ENCODE measurements at regions of chr10 and their contacts with region 1.

Region 1: DNA sequence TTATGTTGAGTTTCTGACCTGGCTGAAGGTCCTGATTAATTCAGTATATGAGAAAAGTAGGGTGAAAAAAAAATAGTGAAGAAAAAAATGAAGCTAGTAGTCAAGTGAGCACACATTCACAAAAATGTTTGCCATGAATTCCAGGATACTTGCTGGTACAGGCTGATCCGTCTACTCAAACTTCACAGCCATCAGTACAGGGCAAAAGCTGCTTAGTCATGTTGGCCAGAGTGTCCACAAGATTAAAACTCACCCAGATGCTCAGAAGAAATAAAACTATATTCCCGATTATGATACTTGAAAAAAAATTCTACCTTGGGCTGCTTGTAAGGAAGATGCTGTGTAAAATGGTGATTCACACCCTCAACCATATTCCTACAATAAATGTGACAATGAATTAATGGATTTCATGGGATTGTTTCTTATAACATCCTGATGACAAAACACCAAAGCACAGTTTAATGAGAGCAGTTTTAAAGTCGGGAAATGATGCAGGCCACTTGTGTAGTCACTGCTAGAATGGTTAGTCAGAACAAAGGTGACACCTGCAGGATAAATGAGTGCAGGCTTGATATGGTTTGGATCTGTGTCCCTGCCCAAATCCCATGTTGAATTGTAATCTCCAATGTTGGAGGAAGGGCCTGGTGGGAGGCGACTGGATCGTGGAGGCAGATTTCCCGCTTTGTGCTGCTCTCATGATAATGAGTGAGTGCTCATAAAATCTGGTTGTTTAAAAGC is 49.2 kb upstream of the ANKRD1 start:
- DNase-seq: no peak
- H3K4me3 ChIP-seq: no peak overlapping the region
- H3K27ac ChIP-seq: peak overlapping the region in 1 of 2 donors; percentile 32
- H3K4me1 ChIP-seq: no peaks in the 10 kb centered on the region
- H3K27me3 ChIP-seq: no peaks in the 10 kb centered on the region
- CTCF ChIP-seq: peak in 3 of 4 experiments; percentile 17 to 41 (median 27)
- POLR2A ChIP-seq: no peak

Region 2: DNA sequence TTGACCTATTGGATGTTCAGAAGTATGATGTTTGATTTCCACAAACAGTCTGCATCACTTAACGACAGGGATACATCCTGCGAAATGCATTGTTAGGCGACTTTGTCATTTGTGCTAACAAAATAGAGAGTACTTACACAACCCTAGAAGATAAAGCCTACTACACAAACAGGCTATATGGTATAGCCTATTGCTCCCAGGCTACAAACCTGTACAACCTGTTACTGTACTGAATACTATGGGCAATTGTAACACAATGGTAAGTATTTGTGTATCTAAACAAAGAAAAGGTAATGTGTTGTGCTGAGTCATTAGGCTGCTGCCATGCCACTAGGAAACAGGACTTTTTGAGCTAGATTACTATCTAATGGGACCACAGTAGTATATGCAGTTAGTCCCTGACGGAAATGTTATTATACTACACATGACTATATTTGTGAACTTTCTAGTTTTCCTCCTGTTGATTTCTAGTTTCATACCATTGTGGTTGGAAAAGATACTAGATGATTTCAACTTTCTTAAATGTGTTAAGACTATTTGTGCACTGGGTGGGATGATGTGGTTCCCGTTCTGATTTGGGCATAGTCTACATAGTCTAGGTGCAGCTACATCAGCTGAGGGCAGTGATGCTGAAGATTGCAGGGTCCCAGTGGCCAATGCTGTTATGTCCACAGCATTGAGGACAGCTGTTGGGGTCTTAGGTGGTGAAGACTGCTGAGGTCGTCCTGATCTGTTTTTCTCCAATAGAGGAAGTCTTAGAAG is 274.0 kb before region 1 on chr10:
- intact Hi-C with region 1: no loop called
- DNase-seq: no peak
- H3K4me3 ChIP-seq: no peak overlapping the region
- H3K27ac ChIP-seq: no peak overlapping the region
- H3K4me1 ChIP-seq: no peaks in the 10 kb centered on the region
- H3K27me3 ChIP-seq: no peaks in the 10 kb centered on the region
- CTCF ChIP-seq: no peak
- POLR2A ChIP-seq: no peak

Region 3: GRCh38 chr10:90905925-90906324 is 64.2 kb before region 1 on chr10:
- intact Hi-C with region 1: no loop called
- DNase-seq: no peak
- H3K4me3 ChIP-seq: no peak overlapping the region
- H3K27ac ChIP-seq: no peak overlapping the region
- H3K4me1 ChIP-seq: no peaks in the 10 kb centered on the region
- H3K27me3 ChIP-seq: no peaks in the 10 kb centered on the region
- CTCF ChIP-seq: no peak
- POLR2A ChIP-seq: no peak

Region 4: GRCh38 chr10:90917238-90917967 is 52.7 kb before region 1 on chr10:
- intact Hi-C with region 1: loop called (anchors 5 kb)
- DNase-seq: no peak
- H3K4me3 ChIP-seq: no peak overlapping the region
- H3K27ac ChIP-seq: no peak overlapping the region
- H3K4me1 ChIP-seq: peaks cover 6% of the 10 kb centered on the region
- H3K27me3 ChIP-seq: peaks cover 6% of the 10 kb centered on the region
- CTCF ChIP-seq: no peak
- POLR2A ChIP-seq: no peak

Region 5: GRCh38 chr10:90930070-90930837 is 39.9 kb before region 1 on chr10:
- intact Hi-C with region 1: loop called (anchors 5 kb)
- DNase-seq: peak; percentile 61
- H3K4me3 ChIP-seq: no peak overlapping the region
- H3K27ac ChIP-seq: peak overlapping the region; percentile 20 to 56
- H3K4me1 ChIP-seq: no peaks in the 10 kb centered on the region
- H3K27me3 ChIP-seq: no peaks in the 10 kb centered on the region
- CTCF ChIP-seq: no peak
- POLR2A ChIP-seq: no peak

Measured in prostate gland (tissue), 2 donors.